KBM-7 (cell line): ENCODE measurements at regions of chr3 and their contacts with region 1.

Region 1: DNA sequence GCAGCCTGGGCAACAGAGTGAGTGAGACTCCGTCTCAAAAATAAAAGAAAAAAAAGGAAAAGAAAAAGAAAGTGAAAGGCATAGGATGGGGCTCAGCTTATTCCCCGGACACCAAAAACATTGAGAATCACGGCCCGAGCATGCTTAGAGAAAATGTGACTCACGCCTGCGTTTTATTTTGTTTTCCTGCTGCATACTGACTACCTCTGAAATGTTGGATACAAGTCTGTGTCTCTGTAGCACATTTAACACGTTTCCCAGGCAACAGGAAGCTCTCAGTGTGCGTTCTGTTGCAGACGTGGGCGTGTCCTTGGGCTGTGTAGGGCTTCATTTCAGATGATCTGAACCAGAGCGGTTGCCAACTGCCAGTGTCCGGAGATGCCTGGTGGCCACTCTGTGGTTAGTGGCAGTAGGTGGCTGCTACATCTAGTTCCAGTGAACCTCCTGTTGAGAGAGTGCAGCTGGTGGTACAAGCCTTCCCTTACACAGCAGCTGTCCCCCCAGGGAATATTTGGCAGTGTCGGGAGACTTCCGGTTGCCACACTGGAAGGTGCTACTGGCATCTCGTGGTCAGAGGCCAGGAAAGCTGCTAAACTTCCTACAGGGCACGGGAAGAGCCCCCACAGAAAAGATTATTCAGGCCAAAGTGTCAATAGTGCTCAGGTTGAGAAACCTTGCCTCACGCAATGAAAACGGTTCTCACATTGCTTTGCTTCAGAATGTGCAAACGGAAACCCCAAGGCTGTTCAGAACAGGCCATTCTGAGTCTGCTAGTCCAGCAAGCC is 3.1 kb downstream of the SLC51A start:
- DNase-seq: peak; percentile 86

Region 2: GRCh38 chr3:195716865-195717210 is 502.5 kb before region 1 on chr3:
- in situ Hi-C with region 1: loop called (anchors 25 kb)
- DNase-seq: no peak